ENCODE measurements at regions of chr2 and their contacts with region 1.

Region 1: DNA sequence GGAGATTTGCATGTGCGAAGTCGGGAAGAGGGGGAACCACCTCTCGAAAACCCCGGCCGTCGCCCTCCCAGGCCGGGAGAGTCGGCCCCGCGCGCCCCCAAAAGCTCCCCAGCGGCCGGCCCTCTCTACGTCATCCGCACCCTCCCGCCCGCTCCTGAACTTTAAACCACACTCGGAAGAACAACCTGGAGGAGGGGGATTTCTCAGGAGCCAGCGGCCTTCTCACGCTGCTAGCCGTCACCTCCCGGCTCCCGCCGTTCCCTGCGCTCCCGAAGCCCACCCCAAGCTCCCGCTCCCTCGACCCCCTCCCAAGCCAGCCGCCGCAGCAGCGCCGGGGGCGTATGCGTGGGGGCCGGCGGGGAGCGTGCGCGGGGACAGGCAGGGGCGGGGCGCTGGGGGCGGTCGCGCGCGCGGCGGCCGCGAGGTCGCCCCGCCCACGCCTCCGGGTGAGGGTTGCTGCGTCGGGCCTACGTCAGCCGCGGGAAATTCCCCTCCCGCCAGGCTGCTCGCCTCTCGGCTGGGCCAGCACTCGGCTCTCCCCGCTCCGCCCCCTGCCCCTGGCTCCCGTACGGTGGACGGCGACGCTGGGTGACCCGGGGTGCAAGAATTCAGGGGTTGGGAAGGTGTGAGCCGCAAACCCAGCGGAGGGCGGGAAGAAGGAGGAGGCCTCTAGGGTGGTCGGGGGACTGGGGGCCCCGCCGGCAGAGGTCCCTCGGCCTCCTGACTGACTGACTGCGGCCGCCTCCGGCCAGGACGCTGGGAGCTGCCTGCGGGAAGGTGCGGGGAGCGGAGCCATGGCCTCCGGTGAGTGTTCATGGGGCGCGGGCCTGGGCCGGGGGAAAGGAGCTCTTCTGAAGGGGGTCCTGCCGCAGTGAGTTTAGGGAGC is at the start of gene REL:
- DNase-seq: peak; percentile 89
- H3K4me3 Mint-ChIP-seq: peak within 1 kb of the TSS; percentile 99
- H3K27ac Mint-ChIP-seq: peak within 1 kb of the TSS; percentile 99
- H3K4me1 Mint-ChIP-seq: peaks cover 45% of the 10 kb centered on the region
- H3K27me3 Mint-ChIP-seq: no peaks in the 10 kb centered on the region
- total RNA-seq, gene REL: 93.6 and 97.2 TPM in 2 replicates

Region 2: DNA sequence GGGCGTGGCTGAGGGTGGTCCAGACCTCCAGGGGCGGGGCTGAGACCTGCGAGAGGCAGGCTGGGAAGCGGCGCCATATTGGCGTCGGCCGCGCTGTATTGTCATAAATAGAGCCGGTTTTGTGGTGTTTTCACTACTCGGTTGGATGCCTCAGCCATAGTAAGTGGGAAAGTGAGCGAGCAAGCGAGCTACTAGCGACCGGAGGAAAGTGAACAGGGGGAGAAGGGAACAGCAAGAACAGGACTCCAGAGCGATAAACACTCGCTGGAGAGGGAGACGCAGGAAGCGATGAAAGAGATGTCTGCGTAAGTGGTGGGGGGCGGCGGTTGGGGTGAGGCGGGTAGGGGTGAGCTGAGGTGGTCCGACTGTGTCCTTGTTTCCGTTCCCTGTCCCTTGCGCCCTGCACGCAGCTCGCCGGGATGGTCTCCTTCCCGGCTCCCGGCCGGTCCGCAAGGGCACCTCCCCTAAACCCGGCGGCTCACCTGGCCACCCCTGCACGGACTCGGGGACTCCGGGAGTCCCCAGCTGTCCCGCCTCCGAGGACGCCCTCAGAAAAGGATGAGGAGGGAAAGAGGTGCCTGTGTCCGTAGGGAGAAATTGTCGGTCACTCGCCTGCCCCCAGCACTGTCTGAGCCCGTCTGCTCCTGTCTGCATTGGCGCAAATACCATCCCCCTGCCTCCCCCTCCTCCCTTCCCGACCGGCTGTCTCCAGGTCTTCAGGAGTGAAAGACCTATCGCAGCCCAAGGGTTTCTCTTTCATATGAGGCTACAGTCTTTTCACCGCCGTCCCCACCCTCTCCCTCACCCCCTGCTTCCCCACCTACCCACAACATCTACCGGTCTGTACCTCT is 124.9 kb before region 1 on chr2 and contains the start of gene PAPOLG:
- intact Hi-C with region 1: loop called (anchors 2 kb)
- DNase-seq: peak; percentile 94
- H3K4me3 Mint-ChIP-seq: peak within 1 kb of the TSS; percentile 99
- H3K27ac Mint-ChIP-seq: peak within 1 kb of the TSS; percentile 99
- H3K4me1 Mint-ChIP-seq: peaks cover 31% of the 10 kb centered on the region
- H3K27me3 Mint-ChIP-seq: no peaks in the 10 kb centered on the region
- total RNA-seq, gene PAPOLG: 17.2 and 22.2 TPM in 2 replicates

Region 3: GRCh38 chr2:60806988-60807681 is 74.2 kb before region 1 on chr2:
- intact Hi-C with region 1: loop called (anchors 1 kb)
- DNase-seq: no peak
- H3K4me3 Mint-ChIP-seq: peak overlapping the region; percentile 32
- H3K27ac Mint-ChIP-seq: peak overlapping the region; percentile 83
- H3K4me1 Mint-ChIP-seq: peaks cover 46% of the 10 kb centered on the region
- H3K27me3 Mint-ChIP-seq: no peaks in the 10 kb centered on the region

Region 4: GRCh38 chr2:60899230-60899891 is 18.1 kb after region 1 on chr2:
- intact Hi-C with region 1: loop called (anchors 1 kb)
- DNase-seq: no peak
- H3K4me3 Mint-ChIP-seq: peak overlapping the region; percentile 54
- H3K27ac Mint-ChIP-seq: peak overlapping the region; percentile 95
- H3K4me1 Mint-ChIP-seq: peaks cover 35% of the 10 kb centered on the region
- H3K27me3 Mint-ChIP-seq: peaks cover 2% of the 10 kb centered on the region

Region 5: DNA sequence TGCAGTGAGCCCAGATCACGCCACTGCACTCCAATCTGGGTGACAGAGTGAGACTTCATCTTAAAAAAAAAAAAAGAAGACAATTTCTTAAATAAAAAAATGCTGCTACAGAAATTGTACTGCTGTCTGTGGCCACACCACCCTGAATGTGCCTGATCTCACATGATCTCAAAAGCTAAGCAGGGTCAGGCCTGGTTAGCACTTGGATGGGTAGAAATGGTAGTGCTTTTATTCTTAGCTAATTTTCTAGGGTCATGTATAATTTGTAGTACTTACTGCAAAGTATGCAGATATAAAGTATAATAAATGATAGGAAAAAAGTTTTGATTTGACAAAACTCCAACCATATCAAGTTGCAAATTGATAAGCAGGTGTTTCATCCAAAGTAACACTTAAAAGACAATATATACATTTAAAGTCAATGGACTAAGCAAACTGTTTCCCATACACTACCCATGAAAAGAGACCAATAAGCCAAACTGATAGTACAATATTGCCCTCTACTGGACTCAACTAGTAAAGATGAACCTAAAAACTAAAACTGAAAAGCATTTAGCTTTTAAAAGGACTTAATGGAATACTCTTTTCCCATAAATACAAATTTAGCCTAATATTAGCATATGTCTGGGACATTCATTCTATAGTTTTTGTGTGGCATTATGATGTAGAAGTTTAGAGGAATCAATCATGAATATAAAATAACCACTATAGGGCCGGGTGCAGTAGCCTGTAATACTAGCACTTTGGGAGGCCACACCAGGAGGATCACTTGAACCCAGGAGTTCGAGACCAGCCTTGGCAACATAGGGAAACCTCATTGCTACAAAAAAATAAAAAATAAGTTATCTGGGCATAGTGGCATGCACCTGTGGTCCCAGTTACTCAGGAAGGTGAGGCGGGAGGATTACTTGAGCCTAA is 117.6 kb after region 1 on chr2:
- intact Hi-C with region 1: loop called (anchors 2 kb)
- DNase-seq: no peak
- H3K4me3 Mint-ChIP-seq: no peak overlapping the region
- H3K27ac Mint-ChIP-seq: no peak overlapping the region
- H3K4me1 Mint-ChIP-seq: no peaks in the 10 kb centered on the region
- H3K27me3 Mint-ChIP-seq: no peaks in the 10 kb centered on the region

Region 6: DNA sequence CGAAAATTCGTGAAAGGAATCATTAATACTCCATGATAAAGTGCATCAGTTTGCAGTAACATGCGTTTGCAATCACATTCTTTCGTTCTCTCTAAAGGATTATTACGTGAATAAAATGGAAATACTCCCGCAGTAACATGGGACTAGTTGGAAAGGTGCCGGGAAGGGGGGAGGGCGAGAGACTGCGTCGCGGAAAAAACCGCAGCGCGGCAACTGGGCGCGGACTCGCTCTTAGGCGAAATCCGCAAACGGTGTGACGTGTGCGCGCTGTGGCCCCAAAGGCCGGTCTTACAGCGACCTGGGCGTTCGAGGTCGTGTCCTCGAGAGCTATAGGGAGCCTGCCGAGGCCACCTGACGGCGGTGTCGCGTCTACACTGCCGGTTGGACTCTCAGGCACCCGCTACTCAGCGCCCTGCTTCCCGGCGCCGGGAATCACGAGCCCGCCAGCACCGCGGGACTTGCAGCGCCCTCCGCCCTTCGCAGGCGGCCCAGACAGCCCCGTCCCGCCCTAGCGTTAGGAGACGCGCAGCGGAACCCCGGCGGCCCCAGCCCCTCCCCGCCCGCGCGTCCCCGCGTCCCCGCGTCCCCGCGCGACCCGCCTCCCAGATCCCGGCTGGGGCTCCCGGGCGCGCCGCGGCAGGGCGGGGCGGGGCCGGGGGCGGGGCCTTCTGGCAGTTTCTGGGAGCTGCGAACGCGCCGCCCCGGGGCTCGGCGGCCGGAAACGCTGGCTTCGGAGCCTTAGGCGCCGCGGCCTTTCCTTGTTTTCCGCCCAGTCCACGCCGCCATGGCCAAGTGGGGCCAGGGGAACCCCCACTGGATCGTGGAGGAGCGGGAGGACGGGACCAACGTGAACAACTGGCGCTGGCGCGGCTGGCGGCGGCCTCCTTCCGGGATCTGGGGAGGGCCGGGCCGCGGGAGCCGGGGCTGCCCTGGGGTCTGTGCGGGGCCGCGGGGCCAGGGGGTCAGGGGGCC is 295.8 kb after region 1 on chr2:
- intact Hi-C with region 1: loop called (anchors 5 kb)
- DNase-seq: peak; percentile 92
- H3K4me3 Mint-ChIP-seq: peak overlapping the region; percentile 90
- H3K27ac Mint-ChIP-seq: peak overlapping the region; percentile 87
- H3K4me1 Mint-ChIP-seq: peaks cover 48% of the 10 kb centered on the region
- H3K27me3 Mint-ChIP-seq: peaks cover 10% of the 10 kb centered on the region

Region 7: DNA sequence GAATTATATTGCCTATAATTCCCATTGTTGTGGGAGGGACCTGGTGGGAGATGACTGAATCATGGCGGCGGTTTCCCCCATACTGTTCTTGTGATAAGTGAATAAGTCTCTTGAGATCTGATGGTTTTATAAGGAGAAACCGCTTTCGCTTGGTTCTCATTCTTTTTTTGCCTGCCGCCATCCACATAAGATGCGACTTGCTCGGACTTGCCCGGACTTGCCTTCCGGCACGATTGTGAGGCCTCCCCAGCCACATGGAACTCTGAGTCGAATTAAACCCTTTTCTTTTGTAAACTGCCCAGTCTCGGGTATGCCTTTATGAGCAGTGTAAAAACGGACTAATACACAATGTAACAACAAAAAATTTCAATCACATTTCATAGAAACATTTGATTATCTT is 396.5 kb after region 1 on chr2:
- intact Hi-C with region 1: no loop called
- DNase-seq: no peak
- H3K4me3 Mint-ChIP-seq: no peak overlapping the region
- H3K27ac Mint-ChIP-seq: no peak overlapping the region
- H3K4me1 Mint-ChIP-seq: peaks cover 3% of the 10 kb centered on the region
- H3K27me3 Mint-ChIP-seq: no peaks in the 10 kb centered on the region

Region 8: DNA sequence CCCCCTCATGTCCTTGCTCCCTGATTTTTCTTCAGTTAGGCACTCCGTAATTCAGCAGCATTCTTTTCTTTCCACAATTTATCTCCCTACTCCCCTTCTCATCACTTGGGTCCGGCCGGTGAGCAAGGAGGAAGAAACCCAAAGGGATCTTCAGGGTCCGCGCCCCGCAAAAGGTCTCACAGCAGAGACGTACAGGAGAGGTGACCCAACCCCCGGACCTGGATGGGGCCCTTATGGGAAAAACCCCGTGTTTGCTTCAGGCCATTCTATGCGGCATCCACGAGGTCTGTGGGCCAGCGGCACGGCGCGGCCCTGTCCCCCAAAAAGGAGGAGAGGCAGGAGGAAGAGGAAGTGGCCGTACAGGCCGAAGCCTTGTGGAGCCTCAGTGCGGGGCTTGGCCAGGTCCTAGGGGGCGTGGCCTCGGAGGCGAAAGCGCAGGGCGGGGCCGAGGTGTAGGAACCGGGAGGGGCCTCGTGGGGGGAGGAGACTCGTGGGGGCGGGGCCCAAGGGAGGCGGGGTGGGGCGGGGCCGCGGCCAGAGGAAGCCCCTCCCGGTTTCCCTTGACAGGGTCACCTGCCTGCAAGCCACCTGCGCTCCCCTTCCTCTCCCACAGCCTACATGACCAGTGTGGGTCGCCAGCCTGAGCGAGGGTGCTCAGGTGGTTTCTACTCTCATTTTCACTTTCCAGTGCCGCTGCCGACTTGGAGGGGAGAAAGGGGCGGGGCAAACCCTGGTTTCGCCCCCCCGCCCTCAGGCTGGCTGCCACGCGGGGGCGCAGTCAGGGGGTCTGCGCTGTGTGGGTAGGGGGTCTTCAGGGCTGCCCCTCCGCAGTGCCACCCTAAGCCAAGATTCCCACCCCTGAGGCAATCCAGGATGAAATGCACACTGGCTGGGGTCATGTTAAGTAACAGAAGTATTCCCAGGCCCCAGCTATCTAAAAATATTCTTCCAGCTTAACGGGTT is 813.3 kb after region 1 on chr2:
- intact Hi-C with region 1: loop called (anchors 5 kb)
- DNase-seq: peak; percentile 80
- H3K4me3 Mint-ChIP-seq: peak overlapping the region; percentile 89
- H3K27ac Mint-ChIP-seq: peak overlapping the region; percentile 76
- H3K4me1 Mint-ChIP-seq: peaks cover 14% of the 10 kb centered on the region
- H3K27me3 Mint-ChIP-seq: peaks cover 2% of the 10 kb centered on the region

Region 9: DNA sequence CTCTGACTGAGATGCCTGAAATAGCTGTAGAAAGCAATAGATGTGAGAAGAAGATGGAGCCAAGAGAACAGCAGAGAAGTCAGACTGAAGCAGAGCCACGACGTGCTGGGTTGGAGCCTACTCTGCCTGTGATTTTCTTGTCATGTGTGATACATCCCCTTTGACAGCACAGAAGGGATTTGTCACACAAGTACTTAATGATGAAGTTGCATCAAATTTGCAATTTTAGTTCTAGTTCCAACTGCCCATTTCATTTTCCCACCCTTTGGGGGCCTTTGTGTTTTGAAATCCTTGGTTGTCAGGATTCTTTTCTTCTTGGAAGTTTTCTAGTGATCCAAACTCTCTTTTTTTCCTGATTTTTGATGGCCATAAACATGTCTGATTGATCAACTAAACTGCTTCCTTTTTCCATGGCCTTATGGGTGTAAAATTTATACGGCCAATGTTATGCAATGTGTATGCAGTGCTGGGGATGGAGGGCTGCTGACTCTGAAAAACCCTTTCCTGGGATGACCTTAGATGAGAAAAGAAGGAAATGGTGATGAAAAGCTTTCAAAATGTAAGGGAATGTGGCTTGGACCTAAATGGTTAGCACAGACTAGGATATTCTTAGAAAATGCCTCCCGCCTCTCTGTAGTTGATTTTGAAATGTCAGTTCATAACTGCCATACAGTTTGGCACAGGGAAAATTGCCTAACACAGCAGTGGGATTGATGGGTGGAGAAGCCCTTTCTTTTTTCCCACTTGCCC is 1305.0 kb after region 1 on chr2:
- intact Hi-C with region 1: no loop called
- DNase-seq: no peak
- H3K4me3 Mint-ChIP-seq: no peak overlapping the region
- H3K27ac Mint-ChIP-seq: no peak overlapping the region
- H3K4me1 Mint-ChIP-seq: no peaks in the 10 kb centered on the region
- H3K27me3 Mint-ChIP-seq: peaks cover 3% of the 10 kb centered on the region

Measured in activated T-helper 1 cell treated with anti-CD3 and anti-CD28 coated beads, Interleukin-12 subunit alpha, Interleukin-12 subunit beta, Interleukin-2, Interleukin-4 antibody, amounts not matched to agents 30 ng/mL and 10 ng/mL and 1 ng/mL, durations not matched to agents 14 hours and 24 hours and 36 hours (primary cell).